BJ (cell line): ENCODE measurements at regions of chr5 and their contacts with region 1.

Region 1: DNA sequence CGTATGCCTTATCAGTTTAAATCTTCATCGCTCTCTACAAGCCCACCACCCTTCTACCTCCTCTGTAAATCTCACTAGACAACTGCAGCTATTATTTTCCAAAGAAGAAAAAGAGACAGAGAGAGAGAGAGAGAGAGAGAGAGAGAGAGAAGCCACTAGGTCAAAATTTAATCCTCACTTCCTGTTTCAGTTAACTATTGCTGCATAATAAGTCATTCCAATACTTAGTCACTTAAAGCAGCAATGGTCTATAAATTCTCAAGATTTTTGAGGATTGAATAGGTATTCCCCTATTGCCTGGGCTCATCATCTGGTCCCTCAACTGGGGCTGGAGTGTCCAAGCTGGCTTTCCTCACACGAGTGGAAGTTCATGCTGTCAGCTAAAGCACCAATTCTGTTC is 68.8 kb downstream of the ITGA1 start:
- DNase-seq: no peak
- H3K4me3 ChIP-seq: no peak overlapping the region
- H3K27me3 ChIP-seq: no peaks in the 10 kb centered on the region
- CTCF ChIP-seq: no peak

Region 2: GRCh38 chr5:52808316-52808901 is 48.2 kb before region 1 on chr5:
- CTCF ChIA-PET with region 1: no interaction called
- POLR2A ChIA-PET with region 1: interaction called, 17 read pairs
- DNase-seq: no peak
- H3K4me3 ChIP-seq: no peak overlapping the region
- H3K27me3 ChIP-seq: no peaks in the 10 kb centered on the region
- CTCF ChIP-seq: no peak